ENCODE measurements at regions of chr7 and their contacts with region 1.

Region 1: GRCh38 chr7:100148559-100149350 is at the start of gene LAMTOR4:
- DNase-seq: peak; percentile 99
- H3K4me3 Mint-ChIP-seq: peak within 1 kb of the TSS; percentile 97
- H3K27ac Mint-ChIP-seq: peak within 1 kb of the TSS; percentile 94
- H3K4me1 Mint-ChIP-seq: peaks cover 24% of the 10 kb centered on the region
- H3K27me3 Mint-ChIP-seq: no peaks in the 10 kb centered on the region
- total RNA-seq, gene LAMTOR4: 119 and 133 TPM in 2 replicates

Region 2: GRCh38 chr7:100044701-100045100 is 104.1 kb before region 1 on chr7:
- intact Hi-C with region 1: no loop called
- DNase-seq: no peak
- H3K4me3 Mint-ChIP-seq: no peak overlapping the region
- H3K27ac Mint-ChIP-seq: no peak overlapping the region
- H3K4me1 Mint-ChIP-seq: peaks cover 20% of the 10 kb centered on the region
- H3K27me3 Mint-ChIP-seq: no peaks in the 10 kb centered on the region

Region 3: DNA sequence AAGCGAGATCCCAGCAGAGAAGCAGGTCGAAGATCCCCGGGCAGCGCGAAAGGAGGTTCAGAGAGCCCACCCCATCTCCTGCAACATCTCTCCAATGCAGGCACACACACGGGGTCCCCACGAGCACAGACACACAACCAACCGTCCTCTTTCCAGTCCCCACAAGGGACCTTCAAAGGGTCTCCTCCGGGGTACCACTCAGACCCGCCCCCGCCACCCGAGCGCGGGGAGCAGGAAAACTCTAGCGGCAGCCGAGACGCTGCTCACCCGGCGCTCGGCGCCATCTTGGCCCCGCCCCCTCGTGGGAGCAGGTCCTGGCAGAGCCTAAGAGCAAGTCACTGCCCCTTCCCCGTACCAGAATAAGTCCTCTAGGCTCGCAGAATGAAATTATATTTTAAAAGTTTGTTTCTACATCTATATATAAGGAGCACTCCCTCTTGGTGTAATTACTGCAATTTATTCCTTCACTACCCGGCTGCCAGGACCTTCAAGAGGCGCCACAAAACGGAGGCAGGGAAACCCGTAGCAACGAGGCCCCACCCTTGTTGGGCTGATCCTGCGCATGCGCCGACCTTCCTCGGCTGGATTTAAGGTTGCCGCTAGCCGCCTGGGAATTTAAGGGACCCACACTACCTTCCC is 29.6 kb before region 1 on chr7 and contains the starts of genes CNPY4 and TAF6:
- intact Hi-C with region 1: loop called (anchors 1 kb)
- DNase-seq: peak; percentile 90
- H3K4me3 Mint-ChIP-seq: peak within 1 kb of the TSS; percentile 98
- H3K27ac Mint-ChIP-seq: peak within 1 kb of the TSS; percentile 97
- H3K4me1 Mint-ChIP-seq: peaks cover 16% of the 10 kb centered on the region
- H3K27me3 Mint-ChIP-seq: no peaks in the 10 kb centered on the region
- total RNA-seq, gene CNPY4: 19.6 and 21.7 TPM in 2 replicates
- total RNA-seq, gene TAF6: 72.9 and 79.2 TPM in 2 replicates

Region 4: DNA sequence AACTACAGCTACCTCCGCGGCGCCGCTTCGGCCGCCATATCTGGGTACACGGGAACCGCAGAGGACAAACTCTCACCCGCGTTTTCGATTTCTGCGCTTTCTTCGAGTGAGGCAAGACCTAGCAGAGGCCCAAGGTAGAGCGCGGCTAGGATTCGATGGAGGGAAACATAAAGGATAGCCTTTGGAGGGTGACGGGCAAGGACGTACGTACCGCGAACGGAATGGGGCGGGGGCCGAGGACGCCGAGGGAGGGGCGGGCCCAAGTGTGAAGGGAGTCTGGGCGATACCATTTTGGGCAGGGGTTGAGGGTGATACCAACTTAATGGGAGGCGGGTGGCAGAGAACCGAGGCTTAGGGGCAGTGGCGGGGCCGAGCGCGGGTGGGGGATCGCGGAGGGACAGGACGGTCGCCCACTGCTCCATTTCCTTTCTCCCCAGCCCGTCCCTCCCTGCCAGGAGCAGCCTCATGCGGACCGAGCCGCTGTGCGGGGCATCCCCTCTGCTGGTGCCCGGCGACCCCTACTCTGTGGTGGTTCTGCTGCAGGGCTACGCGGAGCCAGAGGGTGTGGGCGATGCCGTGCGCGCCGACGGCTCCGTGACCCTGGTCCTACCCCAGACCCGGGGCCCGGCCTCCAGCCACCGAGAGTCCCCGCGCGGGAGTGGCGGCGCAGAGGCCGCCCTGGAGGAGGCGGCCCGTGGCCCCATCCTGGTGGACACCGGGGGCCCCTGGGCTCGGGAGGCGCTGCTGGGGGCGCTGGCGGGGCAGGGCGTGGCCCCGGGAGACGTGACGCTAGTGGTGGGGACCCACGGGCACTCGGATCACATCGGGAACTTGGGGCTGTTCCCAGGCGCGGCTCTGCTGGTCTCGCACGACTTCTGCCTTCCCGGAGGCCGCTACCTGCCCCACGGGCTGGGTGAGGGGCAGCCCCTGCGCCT is 21.6 kb before region 1 on chr7 and contains the start of gene MBLAC1:
- intact Hi-C with region 1: loop called (anchors 1 kb)
- DNase-seq: peak; percentile 85
- H3K4me3 Mint-ChIP-seq: peak within 1 kb of the TSS; percentile 94
- H3K27ac Mint-ChIP-seq: peak within 1 kb of the TSS; percentile 95
- H3K4me1 Mint-ChIP-seq: peaks cover 20% of the 10 kb centered on the region
- H3K27me3 Mint-ChIP-seq: no peaks in the 10 kb centered on the region
- total RNA-seq, gene MBLAC1: 4.1 and 5.5 TPM in 2 replicates

Region 5: GRCh38 chr7:100166970-100167920 is 18.5 kb after region 1 on chr7:
- intact Hi-C with region 1: no loop called
- DNase-seq: no peak
- H3K4me3 Mint-ChIP-seq: peak overlapping the region; percentile 78
- H3K27ac Mint-ChIP-seq: peak overlapping the region; percentile 59
- H3K4me1 Mint-ChIP-seq: peaks cover 76% of the 10 kb centered on the region
- H3K27me3 Mint-ChIP-seq: peaks cover 24% of the 10 kb centered on the region

Region 6: GRCh38 chr7:100177045-100178001 is 28.6 kb after region 1 on chr7 and contains the starts of genes GPC2 and STAG3:
- intact Hi-C with region 1: loop called (anchors 1 kb)
- DNase-seq: peak; percentile 97
- H3K4me3 Mint-ChIP-seq: peak within 1 kb of the TSS; percentile 82
- H3K27ac Mint-ChIP-seq: peak within 1 kb of the TSS; percentile 83
- H3K4me1 Mint-ChIP-seq: peaks cover 46% of the 10 kb centered on the region
- H3K27me3 Mint-ChIP-seq: peaks cover 15% of the 10 kb centered on the region
- total RNA-seq, gene GPC2: 3.9 and 4.8 TPM in 2 replicates
- total RNA-seq, gene STAG3: 25.0 and 30.6 TPM in 2 replicates

Region 7: DNA sequence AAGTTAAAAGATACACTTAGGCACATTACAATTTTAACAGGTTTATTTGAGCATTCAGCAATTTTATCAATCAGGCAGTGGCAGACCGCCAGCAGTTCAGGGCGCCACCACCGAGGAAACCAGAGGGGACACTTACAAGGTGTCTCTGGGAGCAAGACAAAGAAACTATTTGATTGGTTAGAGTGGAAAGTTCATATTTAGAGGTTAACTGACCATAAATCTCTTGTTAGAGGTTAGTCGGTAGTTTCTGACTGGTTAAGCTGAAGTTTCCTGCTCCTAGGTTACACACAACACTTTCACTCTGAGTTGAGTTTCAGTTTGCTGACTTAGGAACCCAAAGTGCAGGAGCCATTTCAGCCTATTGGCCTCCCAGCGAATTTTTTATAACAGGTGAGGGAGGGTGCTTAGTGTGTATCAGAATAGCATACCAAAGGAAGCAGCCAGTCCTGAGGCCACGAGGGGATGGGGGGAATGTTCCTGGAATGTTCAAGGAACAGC is 60.2 kb after region 1 on chr7:
- intact Hi-C with region 1: loop called (anchors 1 kb)
- DNase-seq: peak; percentile 48
- H3K4me3 Mint-ChIP-seq: peak overlapping the region; percentile 71
- H3K27ac Mint-ChIP-seq: peak overlapping the region; percentile 80
- H3K4me1 Mint-ChIP-seq: peaks cover 49% of the 10 kb centered on the region
- H3K27me3 Mint-ChIP-seq: no peaks in the 10 kb centered on the region

Region 8: GRCh38 chr7:100271716-100272537 is 123.2 kb after region 1 on chr7:
- intact Hi-C with region 1: loop called (anchors 2 kb)
- DNase-seq: peak; percentile 98
- H3K4me3 Mint-ChIP-seq: peak overlapping the region; percentile 77
- H3K27ac Mint-ChIP-seq: peak overlapping the region; percentile 55
- H3K4me1 Mint-ChIP-seq: peaks cover 14% of the 10 kb centered on the region
- H3K27me3 Mint-ChIP-seq: peaks cover 2% of the 10 kb centered on the region

Region 9: DNA sequence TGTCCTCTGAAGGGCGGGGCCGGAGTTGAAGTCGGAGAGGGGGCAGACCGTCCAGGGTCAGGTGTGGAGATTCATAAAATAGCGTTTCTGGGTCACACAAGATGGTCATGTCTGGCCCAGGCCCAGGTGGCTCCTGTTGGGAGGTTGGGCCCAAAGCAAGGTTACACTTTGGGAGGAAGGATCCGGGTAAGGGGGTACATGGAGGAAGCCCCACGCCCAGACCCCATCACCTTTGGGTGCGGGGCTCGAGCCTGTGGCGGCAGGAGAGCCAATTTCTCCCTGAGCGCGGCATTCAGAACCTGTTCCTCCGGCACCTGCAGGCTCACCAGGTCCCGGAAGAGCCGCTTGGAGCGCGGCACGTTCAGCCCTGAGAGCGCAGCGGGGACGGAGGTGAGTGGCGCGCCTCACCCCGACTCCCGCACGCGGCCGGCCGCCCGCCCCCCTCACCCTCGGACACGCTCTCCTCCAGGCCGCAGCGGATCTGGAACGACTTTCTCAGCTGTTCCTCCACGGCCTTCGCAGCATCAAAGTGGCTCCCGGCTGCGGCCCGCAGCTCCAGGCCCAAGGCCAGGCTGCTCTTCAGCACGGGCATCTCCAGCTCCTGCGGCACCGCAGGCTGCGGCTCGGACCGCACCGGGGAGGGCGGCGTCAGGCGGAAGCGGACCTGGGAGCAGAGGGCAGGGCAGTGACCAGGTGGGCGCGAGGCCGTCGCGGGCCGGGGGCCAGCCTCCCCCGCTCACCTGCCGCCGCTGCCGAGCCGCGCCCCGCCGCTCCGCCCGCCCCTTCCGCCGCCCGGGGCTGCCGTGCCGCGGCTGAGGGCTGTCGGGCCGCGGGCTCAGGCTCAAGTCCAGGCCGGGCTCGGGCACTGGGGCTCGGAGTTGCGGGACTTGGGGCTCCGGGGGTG is 286.9 kb after region 1 on chr7:
- intact Hi-C with region 1: loop called (anchors 1 kb)
- DNase-seq: peak; percentile 42
- H3K4me3 Mint-ChIP-seq: peak overlapping the region; percentile 94
- H3K27ac Mint-ChIP-seq: peak overlapping the region; percentile 88
- H3K4me1 Mint-ChIP-seq: peaks cover 41% of the 10 kb centered on the region
- H3K27me3 Mint-ChIP-seq: no peaks in the 10 kb centered on the region

Measured in activated T-helper 1 cell treated with anti-CD3 and anti-CD28 coated beads, Interleukin-12 subunit alpha, Interleukin-12 subunit beta, Interleukin-2, Interleukin-4 antibody, amounts not matched to agents 30 ng/mL and 10 ng/mL and 1 ng/mL, durations not matched to agents 14 hours and 24 hours and 36 hours (primary cell).